ENCODE measurements at regions of chr10 and their contacts with region 1.

Region 1: GRCh38 chr10:124688889-124689670 is 55.1 kb downstream of the FAM53B start:
- DNase-seq: peak; percentile 73
- H3K4me3 Mint-ChIP-seq: peak overlapping the region; percentile 48
- H3K27ac Mint-ChIP-seq: peak overlapping the region; percentile 86
- H3K4me1 Mint-ChIP-seq: peaks cover 76% of the 10 kb centered on the region
- H3K27me3 Mint-ChIP-seq: no peaks in the 10 kb centered on the region

Region 2: GRCh38 chr10:124477614-124478363 is 211.3 kb before region 1 on chr10:
- intact Hi-C with region 1: no loop called
- DNase-seq: no peak
- H3K4me3 Mint-ChIP-seq: no peak overlapping the region
- H3K27ac Mint-ChIP-seq: no peak overlapping the region
- H3K4me1 Mint-ChIP-seq: no peaks in the 10 kb centered on the region
- H3K27me3 Mint-ChIP-seq: peaks cover 2% of the 10 kb centered on the region

Region 3: GRCh38 chr10:124626759-124627380 is 62.2 kb before region 1 on chr10:
- intact Hi-C with region 1: loop called (anchors 1 kb)
- DNase-seq: peak; percentile 42
- H3K4me3 Mint-ChIP-seq: peak overlapping the region; percentile 42
- H3K27ac Mint-ChIP-seq: peak overlapping the region; percentile 45
- H3K4me1 Mint-ChIP-seq: peaks cover 31% of the 10 kb centered on the region
- H3K27me3 Mint-ChIP-seq: peaks cover 13% of the 10 kb centered on the region

Region 4: GRCh38 chr10:124671486-124672075 is 17.5 kb before region 1 on chr10:
- intact Hi-C with region 1: loop called (anchors 2 kb)
- DNase-seq: no peak
- H3K4me3 Mint-ChIP-seq: no peak overlapping the region
- H3K27ac Mint-ChIP-seq: no peak overlapping the region
- H3K4me1 Mint-ChIP-seq: peaks cover 40% of the 10 kb centered on the region
- H3K27me3 Mint-ChIP-seq: peaks cover 2% of the 10 kb centered on the region

Region 5: DNA sequence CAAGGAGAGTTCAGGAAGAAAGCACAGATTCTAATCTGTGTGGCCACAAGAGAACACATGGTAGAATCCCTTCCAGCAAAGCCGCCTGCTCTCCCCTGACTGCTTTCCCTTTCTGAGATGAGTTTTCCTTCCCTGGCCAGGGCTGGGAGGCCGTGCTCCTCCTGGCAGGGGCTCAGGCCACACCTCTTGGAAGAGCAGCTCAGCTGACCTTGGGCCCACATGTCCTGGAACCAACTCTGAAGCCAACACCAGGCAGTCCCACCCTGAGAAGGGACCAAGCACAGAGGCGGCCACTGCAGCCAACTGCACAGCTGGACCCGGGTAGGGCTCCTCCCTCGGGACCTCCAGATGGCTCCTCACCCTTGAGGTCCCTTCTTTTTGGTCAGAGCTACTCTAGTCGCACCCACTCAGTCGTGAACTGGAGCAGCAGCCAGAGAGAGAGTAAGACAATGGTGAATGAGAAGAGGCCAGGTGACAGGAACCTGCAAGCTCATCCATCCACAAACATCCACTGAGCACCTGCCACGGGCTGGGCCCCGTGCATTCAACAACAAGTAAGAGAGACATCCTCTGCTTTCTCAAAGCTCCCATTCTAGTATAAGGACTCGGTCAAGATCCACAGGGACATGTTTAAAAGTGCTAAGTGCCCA is 14.8 kb after region 1 on chr10:
- intact Hi-C with region 1: loop called (anchors 2 kb)
- DNase-seq: no peak
- H3K4me3 Mint-ChIP-seq: no peak overlapping the region
- H3K27ac Mint-ChIP-seq: peak overlapping the region; percentile 78
- H3K4me1 Mint-ChIP-seq: peaks cover 96% of the 10 kb centered on the region
- H3K27me3 Mint-ChIP-seq: no peaks in the 10 kb centered on the region

Region 6: GRCh38 chr10:124732931-124733570 is 44.0 kb after region 1 on chr10:
- intact Hi-C with region 1: loop called (anchors 1 kb)
- DNase-seq: peak; percentile 32
- H3K4me3 Mint-ChIP-seq: peak overlapping the region; percentile 53
- H3K27ac Mint-ChIP-seq: peak overlapping the region; percentile 80
- H3K4me1 Mint-ChIP-seq: peaks cover 59% of the 10 kb centered on the region
- H3K27me3 Mint-ChIP-seq: peaks cover 2% of the 10 kb centered on the region